ENCODE measurements at regions of chr6 and their contacts with region 1.

Region 1: DNA sequence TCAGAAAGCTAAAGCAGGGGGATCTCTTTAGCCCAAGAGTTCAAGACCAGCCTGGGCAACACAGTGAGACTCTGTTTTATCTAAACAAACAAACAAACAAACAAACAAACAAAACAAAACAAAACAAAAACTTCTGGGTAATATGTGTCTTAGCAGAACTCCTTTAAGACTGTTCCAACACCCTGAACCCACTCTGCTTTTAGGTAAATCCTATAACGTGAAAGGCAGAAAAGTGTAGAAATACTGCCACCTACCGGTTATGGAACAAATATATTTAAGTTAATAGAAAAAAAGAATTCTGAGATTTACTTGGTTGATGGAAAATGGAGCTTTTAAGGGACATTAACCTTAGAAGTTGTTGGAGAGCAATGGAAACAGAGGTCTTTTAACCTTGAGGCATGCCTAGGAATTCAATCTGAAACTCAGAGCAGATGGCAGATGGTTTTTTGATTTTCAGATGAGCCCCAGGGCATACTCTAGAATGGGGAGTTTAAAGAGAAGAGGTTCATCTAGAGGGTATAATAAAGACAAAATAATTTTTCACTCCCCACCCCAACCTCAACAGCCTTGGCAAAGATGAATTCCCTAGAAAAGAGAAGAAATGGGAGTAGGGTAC is 38.5 kb downstream of the SOD2 start:
- DNase-seq: no peak
- ATAC-seq: no peak
- H3K4me3 Mint-ChIP-seq: no peak overlapping the region
- H3K27ac Mint-ChIP-seq: no peak overlapping the region
- H3K4me1 Mint-ChIP-seq: no peaks in the 10 kb centered on the region
- H3K27me3 Mint-ChIP-seq: no peaks in the 10 kb centered on the region
- CTCF ChIP-seq: peak; percentile 79

Region 2: DNA sequence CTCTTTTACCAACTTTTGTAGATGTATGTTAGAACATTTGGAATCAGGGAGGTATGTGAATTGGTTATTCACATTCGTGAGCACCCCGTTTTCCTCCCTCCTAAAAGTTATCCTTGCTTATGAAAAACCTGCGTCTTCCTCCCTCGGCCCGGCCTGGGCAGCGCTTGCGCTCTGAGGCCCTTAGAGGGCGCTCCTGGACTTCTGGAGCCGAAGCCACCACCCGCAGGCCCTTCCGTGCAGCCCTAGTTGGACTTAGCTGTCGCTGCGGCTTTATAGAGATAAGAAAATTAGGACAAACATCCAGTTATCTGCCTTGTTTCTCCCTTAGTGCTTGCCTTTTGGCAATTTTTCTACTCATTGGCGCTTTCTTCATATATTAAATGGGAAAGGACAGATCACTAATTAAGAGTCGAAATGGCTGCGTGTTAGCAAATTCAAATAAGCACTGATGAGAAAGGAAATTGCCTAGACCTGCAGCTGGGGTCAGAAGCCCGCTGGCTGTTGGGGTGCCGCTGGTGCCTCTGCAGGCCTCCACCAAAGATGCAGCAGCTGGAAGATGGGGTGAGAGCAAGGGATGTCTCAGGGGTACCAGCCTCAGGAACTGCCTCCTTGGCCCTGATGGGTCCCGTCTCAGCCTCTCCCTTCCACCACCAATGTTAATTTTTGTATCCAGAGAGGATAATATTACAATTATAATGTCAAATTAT is 480.2 kb before region 1 on chr6:
- CTCF ChIA-PET with region 1: interaction called, 59 read pairs
- POLR2A ChIA-PET with region 1: no interaction called
- intact Hi-C with region 1: loop called (anchors 5 kb)
- DNase-seq: peak; percentile 81
- ATAC-seq: peak; percentile 89
- H3K4me3 Mint-ChIP-seq: no peak overlapping the region
- H3K27ac Mint-ChIP-seq: no peak overlapping the region
- H3K4me1 Mint-ChIP-seq: peaks cover 4% of the 10 kb centered on the region
- H3K27me3 Mint-ChIP-seq: peaks cover 43% of the 10 kb centered on the region
- CTCF ChIP-seq: peak; percentile 93

Region 3: DNA sequence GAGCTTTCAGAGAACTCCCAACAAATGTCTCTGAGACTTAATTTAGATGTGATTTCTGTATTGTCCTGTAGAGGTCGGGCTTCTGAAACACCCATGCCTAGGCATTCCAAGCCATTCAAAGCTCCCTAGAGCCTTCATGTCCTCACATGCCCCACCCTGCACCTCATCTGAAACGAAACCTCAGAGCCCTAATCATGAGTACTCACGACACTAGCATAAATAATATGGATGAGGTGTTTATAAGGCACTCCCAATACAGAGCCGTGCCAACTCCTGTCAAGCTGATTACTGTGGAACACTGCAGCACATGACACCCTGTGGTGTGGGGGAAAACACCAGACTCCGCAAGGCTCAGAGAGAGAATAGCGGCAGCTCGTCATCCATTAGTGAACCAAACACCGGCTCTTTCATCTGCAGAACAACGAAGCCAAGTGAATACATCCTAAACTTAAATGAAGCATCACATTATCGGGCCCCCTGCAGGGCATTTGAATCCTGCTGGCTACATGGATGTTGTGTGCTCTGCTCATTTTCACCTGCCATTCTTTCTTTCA is 401.6 kb before region 1 on chr6:
- CTCF ChIA-PET with region 1: interaction called, 26 read pairs
- POLR2A ChIA-PET with region 1: no interaction called
- intact Hi-C with region 1: loop called (anchors 10 kb)
- DNase-seq: peak; percentile 3
- ATAC-seq: peak; percentile 72
- H3K4me3 Mint-ChIP-seq: no peak overlapping the region
- H3K27ac Mint-ChIP-seq: no peak overlapping the region
- H3K4me1 Mint-ChIP-seq: peaks cover 1% of the 10 kb centered on the region
- H3K27me3 Mint-ChIP-seq: peaks cover 9% of the 10 kb centered on the region
- CTCF ChIP-seq: peak; percentile 68

Region 4: DNA sequence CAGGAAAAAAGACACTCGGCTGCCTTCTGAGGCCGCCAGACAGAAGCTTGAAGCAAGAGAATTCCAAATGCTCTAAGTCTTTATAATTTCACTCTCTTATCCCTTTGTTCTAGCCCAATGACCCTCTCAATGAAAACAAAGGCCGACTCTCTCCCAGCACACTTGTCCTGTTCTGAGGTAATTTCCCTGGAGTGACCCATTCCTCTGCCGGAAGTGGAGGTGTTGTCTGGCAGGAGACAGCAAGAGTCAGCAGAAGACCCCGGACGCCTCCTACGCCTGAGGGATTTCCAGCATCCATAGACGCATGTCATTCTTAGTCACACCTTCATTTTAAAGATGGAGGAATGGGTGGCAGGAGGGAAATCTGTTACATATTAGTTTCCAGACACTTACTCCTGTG is 71.9 kb before region 1 on chr6:
- CTCF ChIA-PET with region 1: no interaction called
- POLR2A ChIA-PET with region 1: no interaction called
- intact Hi-C with region 1: no loop called
- DNase-seq: no peak
- ATAC-seq: no peak
- H3K4me3 Mint-ChIP-seq: no peak overlapping the region
- H3K27ac Mint-ChIP-seq: no peak overlapping the region
- H3K4me1 Mint-ChIP-seq: no peaks in the 10 kb centered on the region
- H3K27me3 Mint-ChIP-seq: peaks cover 8% of the 10 kb centered on the region
- CTCF ChIP-seq: no peak

Region 5: GRCh38 chr6:159595173-159595572 is 59.4 kb before region 1 on chr6:
- CTCF ChIA-PET with region 1: interaction called, 14 read pairs
- POLR2A ChIA-PET with region 1: no interaction called
- intact Hi-C with region 1: no loop called
- DNase-seq: no peak
- ATAC-seq: no peak
- H3K4me3 Mint-ChIP-seq: no peak overlapping the region
- H3K27ac Mint-ChIP-seq: peak overlapping the region; percentile 11
- H3K4me1 Mint-ChIP-seq: peaks cover 15% of the 10 kb centered on the region
- H3K27me3 Mint-ChIP-seq: no peaks in the 10 kb centered on the region
- CTCF ChIP-seq: no peak

Region 6: DNA sequence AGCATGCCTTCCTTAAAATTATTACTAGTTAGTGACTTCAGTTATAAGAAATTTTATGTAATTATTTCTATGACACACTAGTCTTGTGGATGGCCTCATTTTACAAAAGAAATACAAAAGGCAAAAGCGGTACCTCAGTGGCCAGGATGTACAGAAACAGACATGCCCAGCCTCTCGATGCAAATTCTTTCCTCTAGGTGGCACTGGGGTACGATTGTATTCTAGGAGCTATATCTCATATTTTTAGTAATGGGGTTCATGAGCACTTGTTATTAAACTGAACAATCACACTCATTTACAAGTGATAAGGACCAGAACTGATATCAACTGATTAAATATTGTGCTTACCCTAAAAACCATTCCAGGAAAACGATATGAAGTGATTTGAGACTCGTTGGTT is 21.4 kb before region 1 on chr6:
- CTCF ChIA-PET with region 1: interaction called, 12 read pairs
- POLR2A ChIA-PET with region 1: no interaction called
- intact Hi-C with region 1: no loop called
- DNase-seq: peak; percentile 5
- ATAC-seq: no peak
- H3K4me3 Mint-ChIP-seq: no peak overlapping the region
- H3K27ac Mint-ChIP-seq: no peak overlapping the region
- H3K4me1 Mint-ChIP-seq: no peaks in the 10 kb centered on the region
- H3K27me3 Mint-ChIP-seq: no peaks in the 10 kb centered on the region
- CTCF ChIP-seq: no peak

Region 7: GRCh38 chr6:159665868-159666635 is 11.5 kb after region 1 on chr6:
- CTCF ChIA-PET with region 1: interaction called, 10 read pairs
- POLR2A ChIA-PET with region 1: no interaction called
- intact Hi-C with region 1: no loop called
- DNase-seq: no peak
- ATAC-seq: no peak
- H3K4me3 Mint-ChIP-seq: no peak overlapping the region
- H3K27ac Mint-ChIP-seq: no peak overlapping the region
- H3K4me1 Mint-ChIP-seq: no peaks in the 10 kb centered on the region
- H3K27me3 Mint-ChIP-seq: no peaks in the 10 kb centered on the region
- CTCF ChIP-seq: no peak

Region 8: GRCh38 chr6:159679091-159680077 is 24.8 kb after region 1 on chr6:
- CTCF ChIA-PET with region 1: interaction called, 13 read pairs
- POLR2A ChIA-PET with region 1: no interaction called
- intact Hi-C with region 1: no loop called
- DNase-seq: peak; percentile 30
- ATAC-seq: peak; percentile 64
- H3K4me3 Mint-ChIP-seq: no peak overlapping the region
- H3K27ac Mint-ChIP-seq: peak overlapping the region; percentile 65
- H3K4me1 Mint-ChIP-seq: peaks cover 21% of the 10 kb centered on the region
- H3K27me3 Mint-ChIP-seq: no peaks in the 10 kb centered on the region
- CTCF ChIP-seq: no peak

Region 9: GRCh38 chr6:159908535-159908934 is 253.9 kb after region 1 on chr6:
- CTCF ChIA-PET with region 1: no interaction called
- POLR2A ChIA-PET with region 1: no interaction called
- intact Hi-C with region 1: no loop called
- DNase-seq: no peak
- ATAC-seq: no peak
- H3K4me3 Mint-ChIP-seq: no peak overlapping the region
- H3K27ac Mint-ChIP-seq: no peak overlapping the region
- H3K4me1 Mint-ChIP-seq: no peaks in the 10 kb centered on the region
- H3K27me3 Mint-ChIP-seq: peaks cover 7% of the 10 kb centered on the region
- CTCF ChIP-seq: no peak

Measured in activated CD8-positive, alpha-beta T cell treated with anti-CD3 and anti-CD28 coated beads for 36 hours (primary cell).